ENCODE measurements at regions of chr1 and their contacts with region 1.

Region 1: GRCh38 chr1:1024771-1025451 is 5.0 kb downstream of the AGRN start:
- DNase-seq: peak; percentile 77
- H3K4me3 ChIP-seq: peak overlapping the region; percentile 40 to 56 (median 49)
- H3K27ac ChIP-seq: peak overlapping the region; percentile 47
- H3K4me1 ChIP-seq: peaks cover 57% of the 10 kb centered on the region
- H3K27me3 ChIP-seq: no peaks in the 10 kb centered on the region
- CTCF ChIP-seq: no peak

Region 2: GRCh38 chr1:966611-967300 is 58.2 kb before region 1 on chr1:
- CTCF ChIA-PET with region 1: no interaction called
- dilution Hi-C with region 1: no loop called
- in situ Hi-C with region 1: no loop called
- intact Hi-C with region 1: loop called (anchors 2 kb)
- DNase-seq: peak; percentile 90
- H3K4me3 ChIP-seq: peak overlapping the region; percentile 43 to 70 (median 59)
- H3K27ac ChIP-seq: peak overlapping the region; percentile 97
- H3K4me1 ChIP-seq: peaks cover 29% of the 10 kb centered on the region
- H3K27me3 ChIP-seq: no peaks in the 10 kb centered on the region
- CTCF ChIP-seq: no peak